Caco-2 (cell line): ENCODE measurements at regions of chr13 and their contacts with region 1.

Region 1: GRCh38 chr13:99087096-99087953 is 109.5 kb upstream of the DOCK9 start:
- DNase-seq: peak; percentile 94 to 96
- H3K4me3 ChIP-seq: peak overlapping the region; percentile 96
- H3K4me3 Mint-ChIP-seq: peak overlapping the region; percentile 98
- H3K27ac Mint-ChIP-seq: peak overlapping the region; percentile 92
- H3K4me1 ChIP-seq: peaks cover 14% of the 10 kb centered on the region
- H3K4me1 Mint-ChIP-seq: peaks cover 14% of the 10 kb centered on the region
- H3K27me3 ChIP-seq: no peaks in the 10 kb centered on the region
- H3K27me3 Mint-ChIP-seq: no peaks in the 10 kb centered on the region
- CTCF ChIP-seq: peak; percentile 29 to 47

Region 2: DNA sequence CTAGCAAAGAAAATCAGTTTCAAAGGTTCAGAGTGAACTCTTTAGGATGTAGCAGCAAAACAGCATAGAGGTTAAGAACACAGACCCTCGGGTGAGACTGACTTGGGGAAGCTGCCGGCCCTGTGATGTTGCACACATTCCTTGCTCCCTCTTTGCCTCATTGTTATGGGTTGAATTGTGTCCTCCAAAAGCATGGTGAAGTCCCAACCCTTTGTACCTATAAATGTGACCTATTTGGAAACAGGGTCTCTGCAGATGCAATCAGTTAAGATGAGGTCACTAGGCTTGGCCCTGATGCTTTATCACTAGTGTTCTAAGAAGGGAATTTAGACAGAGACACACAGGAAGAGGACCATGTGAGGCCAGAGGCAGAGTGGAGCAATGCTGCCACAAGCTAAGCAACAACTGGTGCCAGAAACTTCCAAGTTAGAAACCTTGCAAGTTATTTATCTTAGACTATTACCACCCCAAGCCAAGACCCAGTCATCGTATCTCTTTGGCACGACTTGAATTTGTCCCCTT is 190.6 kb before region 1 on chr13:
- CTCF ChIA-PET with region 1: no interaction called
- POLR2A ChIA-PET with region 1: no interaction called
- intact Hi-C with region 1: loop called (anchors 2 kb)
- DNase-seq: peak; percentile 47 to 57
- H3K4me3 ChIP-seq: no peak overlapping the region
- H3K4me3 Mint-ChIP-seq: peak overlapping the region; percentile 8
- H3K27ac Mint-ChIP-seq: peak overlapping the region; percentile 63
- H3K4me1 ChIP-seq: peaks cover 37% of the 10 kb centered on the region
- H3K4me1 Mint-ChIP-seq: peaks cover 28% of the 10 kb centered on the region
- H3K27me3 ChIP-seq: no peaks in the 10 kb centered on the region
- H3K27me3 Mint-ChIP-seq: no peaks in the 10 kb centered on the region
- CTCF ChIP-seq: no peak

Region 3: DNA sequence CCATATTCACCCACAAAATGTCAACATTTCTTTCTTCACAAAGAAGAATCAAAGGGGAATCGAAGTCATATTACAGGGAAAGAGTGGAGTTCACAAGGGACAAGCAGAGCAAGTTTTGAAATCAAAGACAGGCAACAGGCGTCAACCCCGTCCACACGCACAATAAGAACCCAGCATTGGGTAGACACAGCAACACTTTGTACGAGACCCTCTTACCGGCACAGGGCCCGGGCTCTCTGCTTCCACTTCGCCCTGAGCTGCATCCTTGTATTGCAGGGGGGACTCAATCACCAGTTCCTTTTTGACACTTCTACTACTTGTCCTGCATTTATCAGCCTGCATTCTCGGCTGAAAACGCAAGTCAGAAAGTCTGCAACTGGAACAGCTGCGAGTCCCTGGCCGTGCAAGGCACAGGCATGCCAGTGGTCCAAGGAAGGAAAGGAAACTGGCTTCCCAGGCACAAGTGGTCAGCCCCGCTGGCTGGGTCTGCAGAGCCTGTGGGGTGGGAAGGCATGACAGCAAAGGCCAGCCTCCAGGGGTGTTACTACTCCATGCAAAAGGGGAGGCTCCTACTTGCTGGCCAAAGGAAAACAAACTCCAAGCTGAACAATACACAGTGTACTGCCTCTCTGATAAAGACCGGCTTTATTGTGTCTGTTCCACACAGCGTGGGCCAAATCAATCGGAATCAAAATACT is 109.6 kb before region 1 on chr13 and contains the start of gene DOCK9:
- CTCF ChIA-PET with region 1: no interaction called
- POLR2A ChIA-PET with region 1: interaction called, 3 read pairs
- intact Hi-C with region 1: loop called (anchors 5 kb)
- DNase-seq: peak; percentile 63 to 68
- H3K4me3 ChIP-seq: peak within 1 kb of the TSS; percentile 11
- H3K4me3 Mint-ChIP-seq: peak within 1 kb of the TSS; percentile 77
- H3K27ac Mint-ChIP-seq: peak within 1 kb of the TSS; percentile 88
- H3K4me1 ChIP-seq: peaks cover 50% of the 10 kb centered on the region
- H3K4me1 Mint-ChIP-seq: peaks cover 49% of the 10 kb centered on the region
- H3K27me3 ChIP-seq: no peaks in the 10 kb centered on the region
- H3K27me3 Mint-ChIP-seq: no peaks in the 10 kb centered on the region
- CTCF ChIP-seq: no peak
- total RNA-seq, gene DOCK9: 219 and 260 TPM in 2 replicates

Region 4: GRCh38 chr13:99041788-99042187 is 45.5 kb before region 1 on chr13:
- CTCF ChIA-PET with region 1: no interaction called
- POLR2A ChIA-PET with region 1: no interaction called
- intact Hi-C with region 1: loop called (anchors 5 kb)
- DNase-seq: no peak
- H3K4me3 ChIP-seq: no peak overlapping the region
- H3K4me3 Mint-ChIP-seq: no peak overlapping the region
- H3K27ac Mint-ChIP-seq: no peak overlapping the region
- H3K4me1 ChIP-seq: peaks cover 32% of the 10 kb centered on the region
- H3K4me1 Mint-ChIP-seq: peaks cover 56% of the 10 kb centered on the region
- H3K27me3 ChIP-seq: no peaks in the 10 kb centered on the region
- H3K27me3 Mint-ChIP-seq: no peaks in the 10 kb centered on the region
- CTCF ChIP-seq: no peak

Region 5: DNA sequence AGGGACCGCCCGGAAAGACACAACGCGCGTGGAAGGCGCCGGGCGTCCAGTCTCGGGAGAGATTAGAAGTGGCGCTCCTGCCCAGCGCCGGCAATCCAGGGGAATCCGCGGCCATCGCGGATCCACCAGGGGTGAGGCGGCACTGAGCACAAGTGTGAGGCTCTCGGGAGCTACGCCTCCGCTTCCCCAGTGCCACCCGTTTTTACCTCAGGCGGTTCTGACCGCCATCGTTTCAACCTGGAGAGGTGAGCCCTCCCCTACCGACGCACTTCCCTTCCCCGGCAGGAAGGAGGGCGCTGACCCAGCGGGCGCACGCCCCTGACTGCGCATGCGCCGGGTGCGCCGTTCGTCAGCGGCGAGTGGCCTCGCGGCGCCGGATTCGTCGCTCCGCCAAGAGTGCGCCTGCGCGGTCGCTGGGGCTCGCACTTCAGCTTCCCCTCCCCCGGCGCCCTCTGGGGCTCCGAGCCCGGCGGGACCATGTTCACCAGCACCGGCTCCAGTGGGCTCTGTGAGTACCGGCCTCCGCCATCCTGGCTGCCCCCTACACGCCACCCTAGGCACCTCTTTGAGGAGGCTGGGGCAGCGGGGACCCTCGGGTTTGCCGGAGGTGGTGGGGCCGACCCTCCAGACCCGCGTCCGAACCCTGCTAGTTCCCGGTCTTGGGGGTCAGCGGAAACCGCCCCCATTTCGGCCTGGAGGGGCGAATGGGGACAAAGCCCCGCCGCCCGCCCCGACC is 113.3 kb after region 1 on chr13 and contains the start of gene UBAC2:
- CTCF ChIA-PET with region 1: no interaction called
- POLR2A ChIA-PET with region 1: no interaction called
- intact Hi-C with region 1: loop called (anchors 2 kb)
- DNase-seq: peak; percentile 93 to 97
- H3K4me3 ChIP-seq: peak within 1 kb of the TSS; percentile 89
- H3K4me3 Mint-ChIP-seq: peak within 1 kb of the TSS; percentile 92
- H3K27ac Mint-ChIP-seq: peak within 1 kb of the TSS; percentile 85
- H3K4me1 ChIP-seq: peaks cover 19% of the 10 kb centered on the region
- H3K4me1 Mint-ChIP-seq: peaks cover 24% of the 10 kb centered on the region
- H3K27me3 ChIP-seq: no peaks in the 10 kb centered on the region
- H3K27me3 Mint-ChIP-seq: no peaks in the 10 kb centered on the region
- CTCF ChIP-seq: peak in 1 of 2 experiments; percentile 18
- total RNA-seq, gene UBAC2: 91.3 and 103 TPM in 2 replicates

Region 6: GRCh38 chr13:99269627-99270241 is 182.4 kb after region 1 on chr13:
- CTCF ChIA-PET with region 1: no interaction called
- POLR2A ChIA-PET with region 1: no interaction called
- intact Hi-C with region 1: loop called (anchors 1 kb)
- DNase-seq: peak in 1 of 2 experiments; percentile 15
- H3K4me3 ChIP-seq: no peak overlapping the region
- H3K4me3 Mint-ChIP-seq: no peak overlapping the region
- H3K27ac Mint-ChIP-seq: no peak overlapping the region
- H3K4me1 ChIP-seq: no peaks in the 10 kb centered on the region
- H3K4me1 Mint-ChIP-seq: no peaks in the 10 kb centered on the region
- H3K27me3 ChIP-seq: no peaks in the 10 kb centered on the region
- H3K27me3 Mint-ChIP-seq: no peaks in the 10 kb centered on the region
- CTCF ChIP-seq: peak in 1 of 2 experiments; percentile 58

Region 7: DNA sequence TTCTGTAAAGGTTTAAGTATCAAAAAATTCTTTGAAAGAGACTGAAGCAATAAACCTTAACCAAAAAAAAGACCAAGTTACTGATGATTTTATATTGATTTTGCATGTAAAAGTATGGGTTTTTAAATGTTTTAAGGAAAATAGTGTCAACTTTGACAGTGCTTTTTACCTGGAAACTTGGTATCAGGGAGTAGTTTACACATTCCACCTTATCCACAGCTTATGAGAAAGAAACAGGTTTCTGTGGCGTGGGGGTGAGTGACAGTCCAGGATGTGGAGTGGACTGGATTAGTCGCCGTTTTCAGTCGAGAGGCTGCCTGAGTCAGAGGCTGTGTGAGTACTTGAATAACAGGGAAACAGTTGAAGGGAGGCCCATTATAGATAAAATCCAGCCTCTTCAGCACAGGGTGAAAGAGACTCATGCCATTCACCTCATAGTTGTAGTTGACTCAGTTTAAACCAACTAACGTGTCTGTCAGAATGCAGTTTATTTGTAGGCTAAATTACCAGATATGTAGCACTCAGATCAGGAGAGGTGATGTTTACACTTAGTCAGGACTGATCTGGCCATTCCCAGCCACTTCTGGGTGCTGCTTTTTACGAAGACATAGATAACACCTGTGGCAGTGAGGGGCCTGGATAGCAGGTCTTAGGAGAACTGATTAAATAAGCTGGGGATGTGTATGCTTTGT is 220.5 kb after region 1 on chr13:
- CTCF ChIA-PET with region 1: no interaction called
- POLR2A ChIA-PET with region 1: no interaction called
- intact Hi-C with region 1: loop called (anchors 1 kb)
- DNase-seq: no peak
- H3K4me3 ChIP-seq: no peak overlapping the region
- H3K4me3 Mint-ChIP-seq: no peak overlapping the region
- H3K27ac Mint-ChIP-seq: no peak overlapping the region
- H3K4me1 ChIP-seq: no peaks in the 10 kb centered on the region
- H3K4me1 Mint-ChIP-seq: peaks cover 7% of the 10 kb centered on the region
- H3K27me3 ChIP-seq: no peaks in the 10 kb centered on the region
- H3K27me3 Mint-ChIP-seq: no peaks in the 10 kb centered on the region
- CTCF ChIP-seq: no peak